PC-9 (cell line): ENCODE measurements at regions of chr1 and their contacts with region 1.

Region 1: DNA sequence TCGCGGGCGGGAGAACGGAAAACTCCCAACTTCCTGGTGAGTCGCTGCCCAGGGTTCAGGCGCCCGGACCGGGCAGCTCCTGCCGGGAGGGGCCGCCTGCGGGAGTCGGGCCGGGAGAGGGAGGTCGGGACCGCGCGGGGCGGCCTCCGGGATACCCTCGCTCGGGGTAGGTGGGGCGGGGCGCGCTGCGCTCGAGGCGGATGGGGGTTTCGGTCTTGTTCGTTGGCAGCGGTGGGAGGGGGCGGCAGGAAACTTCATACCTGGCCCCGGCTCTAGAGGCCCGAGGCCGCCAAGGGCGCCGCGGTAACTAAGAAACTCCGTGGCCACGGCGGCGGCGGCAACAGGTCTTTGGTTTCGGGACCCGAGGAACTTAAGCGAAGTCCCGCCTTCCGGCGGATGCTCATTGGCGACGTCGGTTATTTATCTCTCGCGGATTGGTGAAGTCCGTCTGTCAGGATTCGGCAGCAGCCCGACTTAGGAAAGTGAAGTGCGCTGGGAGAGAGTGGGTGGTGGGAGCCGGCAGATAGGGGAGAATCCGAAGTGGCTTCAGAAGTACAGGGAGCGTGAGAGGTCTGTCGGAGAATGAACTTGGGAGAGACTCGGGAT is 546 bp downstream of the NEK7 start:
- DNase-seq: peak; percentile 79 to 87
- H3K4me3 ChIP-seq: peak overlapping the region; percentile 91
- H3K27ac ChIP-seq: peak overlapping the region; percentile 81
- H3K4me1 ChIP-seq: peaks cover 34% of the 10 kb centered on the region
- H3K27me3 ChIP-seq: no peaks in the 10 kb centered on the region
- CTCF ChIP-seq: no peak

Region 2: DNA sequence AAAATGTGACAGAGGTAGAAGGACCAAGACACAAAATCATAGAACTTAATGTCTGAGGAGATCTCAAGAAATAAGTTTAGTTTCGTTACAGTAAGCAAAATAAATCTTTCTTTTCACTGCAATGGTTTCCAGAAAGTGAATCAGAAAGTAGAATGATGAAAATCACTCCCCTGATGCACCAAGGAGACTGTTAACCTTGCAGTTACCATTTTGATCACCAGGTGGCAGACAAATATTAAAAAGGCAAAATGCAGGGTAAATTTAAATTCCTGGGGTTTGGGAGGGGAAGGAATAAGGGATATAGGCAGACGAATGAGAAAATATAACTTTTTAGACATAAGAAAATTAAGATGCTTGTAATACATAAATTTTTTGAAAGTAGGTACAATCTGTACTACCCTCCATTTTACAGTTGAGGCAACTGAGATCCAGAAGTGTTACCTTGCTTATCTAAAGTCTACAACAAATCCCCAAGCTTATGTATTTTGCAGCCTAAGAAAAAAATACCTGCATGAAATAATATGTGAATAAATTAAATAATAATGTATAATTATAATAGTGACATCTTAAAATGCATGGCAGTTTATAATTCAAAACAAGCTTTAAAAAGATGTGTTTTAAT is 636.1 kb before region 1 on chr1:
- CTCF ChIA-PET with region 1: no interaction called
- POLR2A ChIA-PET with region 1: interaction called, 7 read pairs
- intact Hi-C with region 1: loop called (anchors 10 kb)
- DNase-seq: peak in 1 of 2 experiments; percentile 1
- H3K4me3 ChIP-seq: no peak overlapping the region
- H3K27ac ChIP-seq: no peak overlapping the region
- H3K4me1 ChIP-seq: no peaks in the 10 kb centered on the region
- H3K27me3 ChIP-seq: no peaks in the 10 kb centered on the region
- CTCF ChIP-seq: peak; percentile 77

Region 3: DNA sequence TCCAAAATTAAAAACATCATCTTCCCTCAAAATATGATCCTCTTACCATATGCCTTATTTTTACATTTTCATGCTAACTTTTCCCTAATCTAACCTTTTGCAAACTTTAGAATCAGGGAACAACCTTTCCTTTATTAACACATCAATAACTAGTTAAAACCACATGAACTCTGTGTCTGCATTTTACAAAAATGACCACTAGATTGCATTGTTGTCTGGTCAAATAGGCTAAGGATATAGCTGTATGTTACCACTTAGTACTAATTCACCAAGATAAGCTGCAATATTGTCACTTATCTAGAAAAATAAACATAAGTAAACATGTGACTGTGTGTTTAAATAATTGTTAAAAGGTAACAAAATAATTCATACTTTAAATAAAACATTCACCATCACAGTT is 464.4 kb before region 1 on chr1:
- CTCF ChIA-PET with region 1: no interaction called
- POLR2A ChIA-PET with region 1: no interaction called
- intact Hi-C with region 1: loop called (anchors 10 kb)
- DNase-seq: no peak
- H3K4me3 ChIP-seq: no peak overlapping the region
- H3K27ac ChIP-seq: no peak overlapping the region
- H3K4me1 ChIP-seq: peaks cover 11% of the 10 kb centered on the region
- H3K27me3 ChIP-seq: no peaks in the 10 kb centered on the region
- CTCF ChIP-seq: no peak; the same call in 1 of the 2 replicates

Region 4: GRCh38 chr1:197706601-197707000 is 450.7 kb before region 1 on chr1:
- CTCF ChIA-PET with region 1: no interaction called
- POLR2A ChIA-PET with region 1: no interaction called
- intact Hi-C with region 1: no loop called
- DNase-seq: no peak
- H3K4me3 ChIP-seq: no peak overlapping the region
- H3K27ac ChIP-seq: no peak overlapping the region
- H3K4me1 ChIP-seq: no peaks in the 10 kb centered on the region
- H3K27me3 ChIP-seq: no peaks in the 10 kb centered on the region
- CTCF ChIP-seq: no peak

Region 5: DNA sequence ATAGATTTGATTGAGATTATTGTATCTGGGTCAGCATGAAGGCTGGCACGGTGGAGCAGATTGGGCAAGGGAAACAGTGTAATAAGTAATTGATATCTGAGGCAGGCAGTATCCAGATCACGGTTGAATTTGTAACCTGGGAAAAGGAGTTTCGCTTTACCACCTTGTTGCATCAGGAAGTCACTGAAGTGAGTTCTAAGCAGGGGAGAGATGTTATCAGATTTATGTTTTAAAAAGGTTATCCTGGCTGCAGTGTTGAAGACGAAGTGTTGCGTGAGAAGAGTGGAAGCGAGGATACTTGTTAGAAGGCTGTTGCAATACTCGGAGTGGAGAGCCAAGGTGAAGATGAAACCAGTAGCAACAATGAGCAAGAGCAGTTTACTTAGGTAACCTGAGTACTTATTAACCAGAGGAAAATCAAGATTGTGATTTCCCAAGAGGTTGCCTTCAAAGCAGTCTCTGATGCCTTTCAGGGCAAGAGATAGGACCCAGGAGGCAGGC is 162.4 kb before region 1 on chr1:
- CTCF ChIA-PET with region 1: no interaction called
- POLR2A ChIA-PET with region 1: no interaction called
- intact Hi-C with region 1: loop called (anchors 10 kb)
- DNase-seq: peak; percentile 20 to 79
- H3K4me3 ChIP-seq: peak overlapping the region; percentile 35; the same call in 1 of the 2 replicates
- H3K27ac ChIP-seq: peak overlapping the region; percentile 79
- H3K4me1 ChIP-seq: no peaks in the 10 kb centered on the region; the same call in 1 of the 2 replicates
- H3K27me3 ChIP-seq: no peaks in the 10 kb centered on the region
- CTCF ChIP-seq: no peak

Region 6: GRCh38 chr1:198118134-198118533 is 39.2 kb before region 1 on chr1:
- CTCF ChIA-PET with region 1: no interaction called
- POLR2A ChIA-PET with region 1: no interaction called
- intact Hi-C with region 1: loop called (anchors 2 kb)
- DNase-seq: no peak
- H3K4me3 ChIP-seq: no peak overlapping the region
- H3K27ac ChIP-seq: no peak overlapping the region
- H3K4me1 ChIP-seq: peaks cover 19% of the 10 kb centered on the region
- H3K27me3 ChIP-seq: no peaks in the 10 kb centered on the region
- CTCF ChIP-seq: no peak

Region 7: GRCh38 chr1:198265073-198265661 is 107.8 kb after region 1 on chr1:
- CTCF ChIA-PET with region 1: no interaction called
- POLR2A ChIA-PET with region 1: no interaction called
- intact Hi-C with region 1: no loop called
- DNase-seq: no peak
- H3K4me3 ChIP-seq: no peak overlapping the region
- H3K27ac ChIP-seq: no peak overlapping the region
- H3K4me1 ChIP-seq: no peaks in the 10 kb centered on the region
- H3K27me3 ChIP-seq: no peaks in the 10 kb centered on the region
- CTCF ChIP-seq: no peak

Region 8: GRCh38 chr1:198275597-198275996 is 118.3 kb after region 1 on chr1:
- CTCF ChIA-PET with region 1: no interaction called
- POLR2A ChIA-PET with region 1: interaction called, 4 read pairs
- intact Hi-C with region 1: loop called (anchors 5 kb)
- DNase-seq: no peak
- H3K4me3 ChIP-seq: no peak overlapping the region
- H3K27ac ChIP-seq: no peak overlapping the region
- H3K4me1 ChIP-seq: no peaks in the 10 kb centered on the region
- H3K27me3 ChIP-seq: no peaks in the 10 kb centered on the region
- CTCF ChIP-seq: no peak

Region 9: DNA sequence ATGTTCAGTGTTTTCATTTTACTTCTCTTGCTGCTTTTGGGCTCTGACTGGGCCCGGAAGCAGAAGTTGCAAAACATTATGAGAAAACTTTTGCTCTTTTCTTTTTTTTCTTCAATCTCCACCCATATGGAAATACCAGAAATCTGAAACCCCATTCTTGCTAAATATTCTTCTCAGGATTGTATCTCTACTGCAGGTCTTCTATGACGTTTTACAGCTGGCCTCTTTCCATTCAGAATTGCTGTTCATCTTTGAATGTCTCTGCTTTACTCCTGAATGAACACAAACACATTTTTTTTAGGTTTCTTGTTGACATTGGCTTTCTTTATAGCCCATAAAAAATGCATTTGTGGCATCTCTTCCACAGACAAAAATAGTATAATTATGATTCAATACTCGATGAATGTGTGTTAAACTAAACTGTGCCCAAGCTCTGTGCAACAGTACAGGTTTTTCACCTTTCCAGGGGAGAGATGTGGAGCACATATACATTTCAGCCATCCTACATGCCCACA is 500.3 kb after region 1 on chr1:
- CTCF ChIA-PET with region 1: no interaction called
- POLR2A ChIA-PET with region 1: no interaction called
- intact Hi-C with region 1: loop called (anchors 5 kb)
- DNase-seq: peak; percentile 45 to 93
- H3K4me3 ChIP-seq: no peak overlapping the region
- H3K27ac ChIP-seq: peak overlapping the region; percentile 70
- H3K4me1 ChIP-seq: peaks cover 28% of the 10 kb centered on the region
- H3K27me3 ChIP-seq: no peaks in the 10 kb centered on the region
- CTCF ChIP-seq: no peak